ENCODE measurements at regions of chr1 and their contacts with region 1.

Region 1: DNA sequence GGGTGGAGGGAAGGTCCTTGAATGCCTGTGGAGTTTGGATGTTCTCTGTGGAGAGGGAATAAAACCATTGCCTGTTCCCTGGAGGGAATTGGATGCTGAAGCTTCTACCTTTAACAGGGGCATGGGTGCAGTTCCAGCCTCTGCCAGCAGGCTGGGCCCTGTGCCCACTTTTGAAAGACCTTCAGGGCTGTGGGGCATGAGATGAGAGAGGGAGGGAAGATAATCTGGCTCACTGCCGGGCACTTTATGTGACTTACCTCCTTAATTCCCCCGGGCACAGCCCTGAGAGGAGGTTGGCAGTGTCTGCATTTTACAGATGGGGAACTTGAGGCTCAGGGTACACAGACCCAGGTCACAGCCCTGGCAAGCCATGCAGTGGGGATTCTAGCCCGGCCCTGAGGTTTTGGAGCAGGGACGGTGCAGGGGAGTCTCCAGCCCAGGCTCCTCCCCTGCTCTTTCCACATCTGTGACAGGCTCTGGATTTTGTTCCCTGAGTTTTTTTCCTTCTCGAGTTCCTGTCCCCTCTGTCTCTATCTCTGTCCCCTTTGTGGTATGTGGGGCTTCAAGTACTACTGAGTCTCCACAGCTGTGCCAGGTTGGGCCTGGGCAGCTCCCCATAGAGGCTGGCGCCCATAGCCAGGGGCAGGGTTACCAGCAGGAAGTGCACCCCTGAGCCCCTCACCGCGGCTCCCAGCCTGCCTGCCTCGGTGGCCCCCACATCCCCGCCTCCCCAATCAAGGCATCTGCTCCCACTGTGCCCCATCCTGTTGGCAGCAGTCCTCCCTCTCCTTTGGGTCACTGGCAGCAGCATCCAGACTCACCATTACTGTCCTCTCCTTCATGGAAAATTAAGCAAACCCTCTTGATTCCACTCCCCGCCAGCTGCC is 14.0 kb upstream of the THEMIS2 start:
- DNase-seq: peak; percentile 89
- H3K4me3 ChIP-seq: peak overlapping the region in 1 of 2 experiments; percentile 33; a peak in 1 of 4 replicates
- H3K27ac ChIP-seq: no peak overlapping the region
- H3K4me1 ChIP-seq: peaks cover 6% of the 10 kb centered on the region in 2 experiments; a peak in 3 of 4 replicates
- H3K27me3 ChIP-seq: no peaks in the 10 kb centered on the region
- CTCF ChIP-seq: peak; percentile 97
- EP300 ChIP-seq: no peak
- RAD21 ChIP-seq: peak; percentile 98

Region 2: DNA sequence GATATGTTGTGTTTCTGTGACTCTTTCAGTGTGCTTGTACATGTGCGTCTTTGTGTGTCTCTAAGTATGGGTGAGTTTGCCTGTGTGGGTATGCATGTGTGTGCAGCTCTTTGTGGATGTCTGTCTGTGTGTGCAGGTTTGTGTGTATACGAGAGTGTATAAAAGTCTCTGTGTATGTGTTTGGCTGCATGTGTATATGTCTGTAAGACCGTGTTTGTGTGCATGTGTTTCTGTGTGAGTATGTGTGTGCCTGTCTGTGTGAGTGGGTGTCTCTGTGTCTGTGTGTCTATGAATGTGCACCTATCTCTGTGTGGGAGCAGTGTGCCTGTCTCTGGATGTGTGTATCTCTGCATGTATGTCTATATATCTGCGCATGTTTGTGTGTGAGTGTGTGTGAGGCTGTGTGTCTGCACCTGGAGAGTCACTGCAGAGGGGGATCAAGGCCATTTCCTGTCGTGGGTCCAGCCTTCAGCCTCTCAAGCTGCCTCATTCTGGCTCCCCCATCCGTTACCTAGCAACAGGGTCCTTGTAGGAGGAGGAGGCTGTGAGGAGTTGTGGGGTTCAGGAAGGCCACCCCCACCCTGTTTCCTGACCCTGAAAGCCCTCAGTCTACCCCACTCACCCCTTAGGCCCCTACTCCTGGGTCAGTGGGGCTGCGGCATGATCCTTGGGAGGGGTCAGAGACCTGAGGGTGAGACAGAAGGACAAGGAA is 233.7 kb before region 1 on chr1:
- CTCF ChIA-PET with region 1: no interaction called
- POLR2A ChIA-PET with region 1: no interaction called
- DNase-seq: no peak
- H3K4me3 ChIP-seq: no peak overlapping the region
- H3K27ac ChIP-seq: no peak overlapping the region
- H3K4me1 ChIP-seq: peaks cover 4 to 8% of the 10 kb centered on the region in 2 experiments; a peak in 1 of 4 replicates
- H3K27me3 ChIP-seq: no peaks in the 10 kb centered on the region
- CTCF ChIP-seq: no peak
- EP300 ChIP-seq: no peak
- RAD21 ChIP-seq: no peak

Region 3: GRCh38 chr1:27744556-27744955 is 113.8 kb before region 1 on chr1:
- CTCF ChIA-PET with region 1: no interaction called
- POLR2A ChIA-PET with region 1: no interaction called
- DNase-seq: no peak
- H3K4me3 ChIP-seq: no peak overlapping the region
- H3K27ac ChIP-seq: no peak overlapping the region
- H3K4me1 ChIP-seq: no peaks in the 10 kb centered on the region
- H3K27me3 ChIP-seq: no peaks in the 10 kb centered on the region
- CTCF ChIP-seq: no peak
- EP300 ChIP-seq: no peak
- RAD21 ChIP-seq: no peak

Region 4: GRCh38 chr1:27879374-27880082 is 21.2 kb after region 1 on chr1:
- CTCF ChIA-PET with region 1: interaction called, 10 read pairs
- POLR2A ChIA-PET with region 1: no interaction called
- DNase-seq: peak; percentile 78
- H3K4me3 ChIP-seq: no peak overlapping the region
- H3K27ac ChIP-seq: no peak overlapping the region; a peak in 1 of 4 replicates
- H3K4me1 ChIP-seq: peaks cover 0 to 18% of the 10 kb centered on the region in 2 experiments; a peak in 1 of 4 replicates
- H3K27me3 ChIP-seq: no peaks in the 10 kb centered on the region
- CTCF ChIP-seq: no peak
- EP300 ChIP-seq: peak in 1 of 2 experiments; percentile 51; a peak in 1 of 4 replicates
- RAD21 ChIP-seq: no peak

Region 5: GRCh38 chr1:27971674-27972073 is 113.4 kb after region 1 on chr1:
- CTCF ChIA-PET with region 1: interaction called, 10 read pairs
- POLR2A ChIA-PET with region 1: no interaction called
- DNase-seq: peak; percentile 48
- H3K4me3 ChIP-seq: no peak overlapping the region
- H3K27ac ChIP-seq: no peak overlapping the region
- H3K4me1 ChIP-seq: peaks cover 10 to 14% of the 10 kb centered on the region in 2 experiments; a peak in 3 of 4 replicates
- H3K27me3 ChIP-seq: no peaks in the 10 kb centered on the region
- CTCF ChIP-seq: no peak
- EP300 ChIP-seq: no peak
- RAD21 ChIP-seq: no peak

Region 6: GRCh38 chr1:27979151-27979858 is 121.0 kb after region 1 on chr1:
- CTCF ChIA-PET with region 1: interaction called, 40 read pairs
- POLR2A ChIA-PET with region 1: no interaction called
- DNase-seq: no peak
- H3K4me3 ChIP-seq: no peak overlapping the region
- H3K27ac ChIP-seq: no peak overlapping the region
- H3K4me1 ChIP-seq: no peaks in the 10 kb centered on the region; a peak in 1 of 4 replicates
- H3K27me3 ChIP-seq: no peaks in the 10 kb centered on the region
- CTCF ChIP-seq: peak; percentile 69
- EP300 ChIP-seq: no peak
- RAD21 ChIP-seq: peak; percentile 68

Region 7: GRCh38 chr1:27992276-27992675 is 134.0 kb after region 1 on chr1:
- CTCF ChIA-PET with region 1: interaction called, 14 read pairs
- POLR2A ChIA-PET with region 1: no interaction called
- DNase-seq: no peak
- H3K4me3 ChIP-seq: no peak overlapping the region
- H3K27ac ChIP-seq: no peak overlapping the region
- H3K4me1 ChIP-seq: no peaks in the 10 kb centered on the region
- H3K27me3 ChIP-seq: no peaks in the 10 kb centered on the region
- CTCF ChIP-seq: no peak
- EP300 ChIP-seq: no peak
- RAD21 ChIP-seq: no peak

Region 8: GRCh38 chr1:28099050-28099769 is 240.9 kb after region 1 on chr1:
- CTCF ChIA-PET with region 1: no interaction called
- POLR2A ChIA-PET with region 1: no interaction called
- DNase-seq: no peak
- H3K4me3 ChIP-seq: no peak overlapping the region
- H3K27ac ChIP-seq: no peak overlapping the region
- H3K4me1 ChIP-seq: no peaks in the 10 kb centered on the region
- H3K27me3 ChIP-seq: no peaks in the 10 kb centered on the region
- CTCF ChIP-seq: no peak
- EP300 ChIP-seq: no peak
- RAD21 ChIP-seq: no peak

Region 9: GRCh38 chr1:28208818-28209441 is 350.6 kb after region 1 on chr1:
- CTCF ChIA-PET with region 1: interaction called, 26 read pairs
- POLR2A ChIA-PET with region 1: no interaction called
- DNase-seq: peak; percentile 59
- H3K4me3 ChIP-seq: peak overlapping the region in 1 of 2 experiments; percentile 30; a peak in 1 of 4 replicates
- H3K27ac ChIP-seq: no peak overlapping the region
- H3K4me1 ChIP-seq: no peaks in the 10 kb centered on the region
- H3K27me3 ChIP-seq: no peaks in the 10 kb centered on the region
- CTCF ChIP-seq: peak; percentile 80
- EP300 ChIP-seq: no peak
- RAD21 ChIP-seq: peak; percentile 91

Measured in SK-N-SH (cell line).